GM10248 (cell line): ENCODE measurements at regions of chr5 and their contacts with region 1.

Region 1: GRCh38 chr5:177390363-177391300 is 6.4 kb downstream of the SLC34A1 start:
- DNase-seq: peak; percentile 91
- CTCF ChIP-seq: peak; percentile 90

Region 2: GRCh38 chr5:177311723-177312648 is 78.6 kb before region 1 on chr5 and contains the start of gene MXD3:
- CTCF ChIA-PET with region 1: interaction called, 30 read pairs
- POLR2A ChIA-PET with region 1: no interaction called
- DNase-seq: peak; percentile 98
- CTCF ChIP-seq: no peak

Region 3: DNA sequence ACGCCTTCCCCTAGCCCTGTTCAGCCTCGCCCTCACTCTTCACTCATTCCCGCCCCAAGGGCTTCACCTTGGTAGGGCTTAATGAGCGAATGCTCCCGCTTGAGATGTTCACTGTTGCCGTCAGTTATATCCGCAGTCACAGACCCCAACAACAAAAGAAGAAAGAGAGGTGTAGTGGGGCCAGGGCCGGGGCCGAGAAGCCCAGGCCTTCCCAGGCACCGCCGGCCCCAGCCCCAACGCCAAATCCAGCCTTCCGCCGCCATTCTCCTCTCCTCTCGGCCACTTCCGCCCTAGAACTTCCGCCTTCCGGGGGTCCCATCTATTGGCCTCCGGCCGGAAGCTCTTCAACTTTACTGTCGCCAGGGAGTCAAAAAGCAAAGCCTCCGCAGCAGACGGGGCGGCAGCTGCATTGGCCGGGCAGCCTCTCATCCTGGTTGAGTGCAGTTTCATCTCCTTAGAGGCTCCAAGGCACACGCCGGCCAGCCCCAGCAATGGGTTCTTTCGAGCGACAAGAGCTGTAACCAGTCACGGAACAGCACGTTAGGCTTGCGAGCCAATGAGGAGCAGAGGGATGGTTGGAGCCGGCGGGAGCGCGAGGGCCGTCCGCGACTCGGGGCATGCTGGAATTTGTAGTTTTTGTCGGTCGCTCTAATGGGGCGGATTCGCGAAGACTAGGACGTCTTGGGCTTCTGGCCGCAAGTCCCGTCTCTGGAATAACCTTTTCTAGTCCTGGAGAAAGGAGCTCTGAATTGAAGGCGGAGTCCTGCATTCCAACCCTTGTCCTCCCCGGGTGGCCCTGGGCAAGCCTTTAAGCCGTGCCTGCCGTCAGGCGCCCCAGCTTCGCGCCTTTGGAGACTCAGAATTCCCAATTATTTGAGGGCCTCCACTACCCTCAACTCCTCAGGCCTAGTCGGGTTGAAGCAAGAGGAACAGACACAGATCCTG is 39.0 kb before region 1 on chr5 and contains the start of gene LMAN2:
- CTCF ChIA-PET with region 1: interaction called, 734 read pairs
- POLR2A ChIA-PET with region 1: no interaction called
- DNase-seq: peak; percentile 94
- CTCF ChIP-seq: no peak

Region 4: DNA sequence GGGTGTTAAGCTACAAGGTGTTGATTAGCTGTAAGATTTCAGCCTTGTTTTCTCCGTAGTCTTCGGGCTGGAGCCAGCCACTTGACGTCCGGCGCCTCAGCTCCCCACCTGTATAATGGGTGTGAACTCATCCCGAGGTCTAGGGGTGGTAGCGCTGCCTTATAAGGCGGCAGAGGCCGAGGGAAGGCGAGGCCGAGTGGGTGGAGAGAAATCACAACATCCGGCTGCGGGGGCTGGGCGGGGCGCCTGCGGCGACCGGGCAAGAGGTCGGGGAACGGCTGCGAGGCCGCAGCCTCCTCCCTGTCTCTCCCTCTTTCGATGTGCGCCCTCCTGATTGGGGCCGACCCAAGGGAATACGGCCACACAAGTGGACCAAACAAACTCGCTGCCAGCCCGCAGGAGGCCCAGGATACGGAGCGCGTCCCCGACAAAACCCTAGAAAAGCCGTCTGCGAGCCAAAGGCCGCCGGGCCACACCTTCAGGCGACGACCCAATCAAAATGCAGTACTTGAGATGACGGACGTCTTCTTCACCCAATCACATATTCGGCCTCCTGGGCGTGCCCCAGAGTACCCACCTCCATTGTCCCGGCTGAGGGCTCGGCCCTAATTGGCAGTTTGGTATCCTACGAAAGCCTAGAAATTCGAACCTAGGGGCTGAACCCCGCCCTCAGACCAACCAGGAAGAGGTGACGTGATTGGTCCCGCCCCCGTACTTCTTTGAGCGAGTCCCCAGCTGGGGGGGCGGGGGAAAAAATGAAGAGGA is 35.4 kb after region 1 on chr5:
- CTCF ChIA-PET with region 1: interaction called, 27 read pairs
- POLR2A ChIA-PET with region 1: interaction called, 7 read pairs
- DNase-seq: peak; percentile 97
- CTCF ChIP-seq: no peak

Region 5: GRCh38 chr5:177440211-177440971 is 49.8 kb after region 1 on chr5:
- CTCF ChIA-PET with region 1: interaction called, 285 read pairs
- POLR2A ChIA-PET with region 1: interaction called, 3 read pairs
- DNase-seq: no peak
- CTCF ChIP-seq: no peak

Region 6: DNA sequence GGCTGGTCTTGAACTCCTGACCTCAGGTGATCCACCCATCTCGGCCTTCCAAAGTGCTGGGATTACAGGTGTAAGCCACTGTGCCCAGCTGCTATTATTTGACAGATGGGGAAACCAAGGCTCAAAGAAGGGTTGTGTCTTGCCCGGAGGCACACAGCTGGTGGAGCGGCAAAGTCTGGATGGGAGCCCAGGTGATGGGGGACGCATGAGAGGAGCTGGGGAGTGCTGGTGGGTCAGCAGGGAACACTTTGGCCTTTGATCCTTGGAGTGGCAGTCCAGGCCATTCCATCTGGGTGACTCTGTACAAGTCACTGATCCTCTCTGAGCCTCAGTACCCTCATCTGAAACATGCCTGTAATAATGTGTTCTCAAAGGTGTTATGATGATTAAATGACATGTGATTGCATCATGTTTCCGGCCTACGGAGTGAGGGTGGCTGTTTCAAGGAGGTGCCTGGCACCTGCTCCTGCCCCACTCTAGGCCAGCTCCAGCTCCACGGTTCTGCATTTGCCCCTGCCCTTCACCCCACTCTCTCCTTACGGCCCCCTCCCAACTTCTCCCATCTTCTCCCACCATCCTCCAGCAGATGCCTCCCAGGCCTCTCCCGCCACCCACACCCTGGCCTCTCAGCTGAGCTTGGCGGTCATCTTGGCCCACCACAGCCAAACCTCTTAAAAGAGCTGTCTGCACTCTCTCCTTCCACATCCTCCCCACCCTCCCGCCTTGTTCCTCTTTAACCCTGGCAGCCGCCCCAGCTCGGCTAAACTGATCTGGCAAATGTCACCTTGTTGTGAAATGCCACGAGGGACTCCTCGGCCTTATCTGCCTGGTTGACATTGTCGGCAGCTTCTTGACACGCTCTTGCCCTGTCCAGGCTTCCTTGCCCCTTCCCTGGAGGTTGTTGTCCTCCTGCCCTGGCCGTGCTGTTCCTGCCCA is 88.3 kb after region 1 on chr5:
- CTCF ChIA-PET with region 1: interaction called, 10 read pairs
- POLR2A ChIA-PET with region 1: no interaction called
- DNase-seq: peak; percentile 35
- CTCF ChIP-seq: no peak